ENCODE measurements at regions of chr3 and their contacts with region 1.

Region 1: GRCh38 chr3:45043728-45044299 is 17.7 kb downstream of the CLEC3B start:
- DNase-seq: no peak
- ATAC-seq: no peak
- H3K4me3 Mint-ChIP-seq: no peak overlapping the region
- H3K27ac Mint-ChIP-seq: no peak overlapping the region
- H3K4me1 Mint-ChIP-seq: peaks cover 6% of the 10 kb centered on the region
- H3K27me3 Mint-ChIP-seq: peaks cover 4% of the 10 kb centered on the region
- CTCF ChIP-seq: no peak

Region 2: GRCh38 chr3:45055411-45056143 is 11.8 kb after region 1 on chr3:
- CTCF ChIA-PET with region 1: interaction called, 20 read pairs
- POLR2A ChIA-PET with region 1: no interaction called
- DNase-seq: peak; percentile 34
- ATAC-seq: peak; percentile 67
- H3K4me3 Mint-ChIP-seq: no peak overlapping the region
- H3K27ac Mint-ChIP-seq: no peak overlapping the region
- H3K4me1 Mint-ChIP-seq: peaks cover 19% of the 10 kb centered on the region
- H3K27me3 Mint-ChIP-seq: peaks cover 92% of the 10 kb centered on the region
- CTCF ChIP-seq: 0 out of 2 replicates have a peak, but pooled peaks have one; percentile 11

Region 3: GRCh38 chr3:45224824-45225464 is 181.1 kb after region 1 on chr3:
- CTCF ChIA-PET with region 1: interaction called, 11 read pairs
- POLR2A ChIA-PET with region 1: no interaction called
- DNase-seq: peak; percentile 81
- ATAC-seq: peak; percentile 73
- H3K4me3 Mint-ChIP-seq: peak overlapping the region; percentile 91
- H3K27ac Mint-ChIP-seq: no peak overlapping the region
- H3K4me1 Mint-ChIP-seq: peaks cover 34% of the 10 kb centered on the region
- H3K27me3 Mint-ChIP-seq: peaks cover 33% of the 10 kb centered on the region
- CTCF ChIP-seq: peak; percentile 17; the same call in 1 of the 2 replicates

Measured in WTC11 (cell line).